Naive thymus-derived CD4-positive, alpha-beta T cell (primary cell): ENCODE measurements at regions of chr6 and their contacts with region 1.

Region 1: DNA sequence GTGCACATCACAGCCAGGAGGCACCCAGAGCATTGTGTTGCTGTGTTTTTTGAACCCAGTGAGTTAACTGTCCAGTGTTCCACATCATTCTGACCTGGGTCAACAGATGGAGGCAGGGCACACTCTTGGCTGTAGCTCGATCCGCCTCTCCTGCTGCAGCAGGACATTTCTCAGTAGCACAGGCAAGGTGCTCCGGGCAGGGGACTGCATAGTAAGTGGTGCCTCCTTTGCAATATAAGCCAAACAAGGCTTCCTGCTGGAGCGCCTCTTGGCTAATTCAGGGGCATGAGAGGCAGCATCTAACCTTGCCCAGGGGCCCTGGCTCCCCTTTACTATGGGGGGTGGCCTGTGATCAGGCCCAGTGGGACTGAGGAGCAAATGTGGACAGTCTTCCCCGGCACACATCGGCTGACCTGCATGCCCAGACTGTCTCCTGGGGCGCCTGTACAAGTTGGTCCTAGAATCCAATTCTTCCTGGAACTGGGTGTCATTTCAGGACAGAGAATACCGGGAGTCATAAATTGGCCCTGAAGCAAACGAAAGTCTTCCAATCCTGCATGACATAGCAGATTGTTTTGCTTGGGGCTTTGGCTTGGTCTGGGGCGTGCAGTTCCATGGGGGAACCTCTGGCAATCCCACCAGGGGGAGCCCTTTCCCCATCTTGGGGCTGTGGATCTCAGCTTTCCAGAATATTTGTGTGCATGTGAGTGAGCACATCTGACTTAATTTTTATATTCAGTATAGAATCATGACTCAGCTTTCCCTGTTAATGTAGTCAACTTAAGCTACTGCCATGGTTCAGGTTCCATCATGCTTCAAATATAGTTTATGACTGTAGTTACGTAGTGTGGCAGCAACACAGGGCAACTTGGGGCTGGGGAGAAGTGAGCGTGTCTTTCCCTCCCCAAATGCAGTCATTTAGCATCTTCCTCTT is 56.0 kb upstream of the DDR1 start:
- DNase-seq: peak; percentile 66 to 86 (median 79)
- ATAC-seq: peak; percentile 92
- H3K4me3 ChIP-seq: peak overlapping the region; percentile 80
- H3K4me3 Mint-ChIP-seq: peak overlapping the region; percentile 89 to 100 (median 96)
- H3K27ac ChIP-seq: peak overlapping the region; percentile 84
- H3K27ac Mint-ChIP-seq: peak overlapping the region; percentile 82 to 99 (median 96)
- H3K4me1 ChIP-seq: peaks cover 36 to 45% of the 10 kb centered on the region in 2 donors
- H3K4me1 Mint-ChIP-seq: peaks cover 51 to 92% (median 87%) of the 10 kb centered on the region in 7 donors
- H3K27me3 ChIP-seq: no peaks in the 10 kb centered on the region
- H3K27me3 Mint-ChIP-seq: no peaks in the 10 kb centered on the region

Region 2: DNA sequence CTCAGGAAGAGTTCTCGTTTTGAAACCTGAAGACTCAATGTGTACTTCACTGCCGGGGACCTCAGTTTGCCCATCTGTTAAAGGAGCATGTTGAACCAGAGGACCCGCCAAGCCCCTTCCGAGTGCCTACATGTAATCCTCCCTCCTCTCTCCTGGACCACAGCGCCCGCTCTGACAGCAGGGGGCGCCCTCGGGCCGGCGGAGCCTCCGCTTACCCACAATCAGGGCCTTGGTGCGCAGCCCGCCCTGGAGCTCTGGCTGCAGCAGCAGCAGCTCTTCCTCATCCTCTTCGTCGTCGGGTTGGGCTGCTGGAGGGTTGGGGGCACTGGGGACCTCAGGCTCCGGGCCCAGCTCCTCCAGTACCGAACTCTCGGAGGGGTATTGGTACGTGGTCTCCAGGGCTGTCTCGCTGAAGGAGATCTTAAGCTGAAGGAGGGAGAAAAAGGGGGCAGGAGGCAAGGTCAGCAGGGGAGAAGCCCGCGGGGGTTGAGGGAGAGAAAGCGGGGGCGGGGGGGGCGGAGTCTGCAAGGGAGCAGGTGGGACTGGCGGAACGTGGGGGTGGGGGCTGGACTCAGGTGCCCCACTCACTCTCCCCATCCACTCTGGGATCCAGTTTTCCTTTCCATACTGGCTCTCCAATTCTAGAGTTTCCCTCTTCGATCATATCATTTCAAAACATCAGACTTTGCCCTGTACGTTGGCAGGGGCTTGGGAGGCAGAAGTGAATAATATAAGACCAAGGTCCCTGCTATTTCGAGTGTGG is 149.1 kb before region 1 on chr6:
- CTCF ChIA-PET with region 1: no interaction called
- POLR2A ChIA-PET with region 1: no interaction called
- intact Hi-C with region 1: loop called (anchors 5 kb)
- DNase-seq: peak; percentile 86 to 97 (median 92)
- ATAC-seq: peak; percentile 65
- H3K4me3 ChIP-seq: peak overlapping the region; percentile 98
- H3K4me3 Mint-ChIP-seq: peak overlapping the region; percentile 90 to 100 (median 97)
- H3K27ac ChIP-seq: peak overlapping the region; percentile 95
- H3K27ac Mint-ChIP-seq: peak overlapping the region; percentile 85 to 99 (median 97)
- H3K4me1 ChIP-seq: peaks cover 5 to 24% of the 10 kb centered on the region in 2 donors
- H3K4me1 Mint-ChIP-seq: peaks cover 20 to 47% (median 38%) of the 10 kb centered on the region in 7 donors
- H3K27me3 ChIP-seq: no peaks in the 10 kb centered on the region
- H3K27me3 Mint-ChIP-seq: no peaks in the 10 kb centered on the region

Region 3: GRCh38 chr6:30742316-30743098 is 85.8 kb before region 1 on chr6 and contains the start of gene FLOT1:
- CTCF ChIA-PET with region 1: interaction called, 6 read pairs
- POLR2A ChIA-PET with region 1: interaction called, 5 read pairs
- intact Hi-C with region 1: loop called (anchors 1 to 2 kb)
- DNase-seq: peak in 7 of 9 donors; percentile 47 to 98 (median 56)
- ATAC-seq: peak; percentile 84
- H3K4me3 ChIP-seq: peak within 1 kb of the TSS; percentile 85
- H3K4me3 Mint-ChIP-seq: peak within 1 kb of the TSS; percentile 84 to 100 (median 93)
- H3K27ac ChIP-seq: peak within 1 kb of the TSS; percentile 83
- H3K27ac Mint-ChIP-seq: peak within 1 kb of the TSS; percentile 84 to 98 (median 93)
- H3K4me1 ChIP-seq: peaks cover 28 to 35% of the 10 kb centered on the region in 2 donors
- H3K4me1 Mint-ChIP-seq: peaks cover 48 to 74% (median 61%) of the 10 kb centered on the region in 7 donors
- H3K27me3 ChIP-seq: no peaks in the 10 kb centered on the region
- H3K27me3 Mint-ChIP-seq: no peaks in the 10 kb centered on the region
- total RNA-seq, gene FLOT1: 59.4 to 204 (median 81.3) TPM

Region 4: DNA sequence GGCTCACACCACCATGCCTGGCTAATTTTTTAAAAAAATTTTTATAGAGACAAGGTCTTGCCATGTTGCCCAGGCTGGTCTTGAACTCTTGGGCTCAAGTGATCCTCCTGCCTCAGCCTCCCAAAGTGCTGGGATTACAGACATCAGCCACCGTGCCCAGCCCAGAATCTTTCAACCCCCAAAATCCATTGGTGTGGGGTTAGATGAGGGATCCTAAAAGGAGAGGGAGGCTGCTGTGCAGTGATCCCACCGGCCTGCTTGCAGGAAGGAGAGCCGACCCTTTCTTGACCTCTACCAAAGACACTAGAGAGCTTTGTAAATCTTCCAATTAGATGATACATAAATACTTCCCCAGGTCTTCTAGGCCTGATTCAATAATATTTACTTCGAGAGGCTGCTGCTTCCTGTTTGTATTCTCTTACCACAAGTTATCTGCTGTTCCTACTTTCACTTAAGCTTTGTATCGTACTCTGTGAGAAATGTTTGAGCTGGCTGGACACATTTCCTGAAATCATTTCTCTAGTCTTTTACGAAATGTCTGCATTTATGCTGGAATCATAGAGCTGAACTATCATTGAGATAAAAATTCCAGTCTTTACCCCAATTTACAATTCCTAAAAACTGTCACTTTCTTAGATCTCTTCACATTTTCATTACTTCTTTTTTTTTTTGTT is 34.6 kb before region 1 on chr6:
- CTCF ChIA-PET with region 1: interaction called, 7 read pairs
- POLR2A ChIA-PET with region 1: interaction called, 10 read pairs
- intact Hi-C with region 1: no loop called
- DNase-seq: peak in 7 of 9 donors; percentile 22 to 69 (median 57)
- ATAC-seq: peak; percentile 94
- H3K4me3 ChIP-seq: peak overlapping the region; percentile 12
- H3K4me3 Mint-ChIP-seq: peak overlapping the region; percentile 64 to 85 (median 78)
- H3K27ac ChIP-seq: peak overlapping the region; percentile 71
- H3K27ac Mint-ChIP-seq: peak overlapping the region; percentile 90 to 99 (median 96)
- H3K4me1 ChIP-seq: peaks cover 16 to 27% of the 10 kb centered on the region in 2 donors
- H3K4me1 Mint-ChIP-seq: peaks cover 29 to 72% (median 58%) of the 10 kb centered on the region in 7 donors
- H3K27me3 ChIP-seq: no peaks in the 10 kb centered on the region
- H3K27me3 Mint-ChIP-seq: no peaks in the 10 kb centered on the region

Region 5: GRCh38 chr6:30883685-30884520 is 55.6 kb after region 1 on chr6 and contains the start of gene DDR1:
- CTCF ChIA-PET with region 1: interaction called, 172 read pairs
- POLR2A ChIA-PET with region 1: interaction called, 20 read pairs
- intact Hi-C with region 1: no loop called
- DNase-seq: peak in 6 of 9 donors; percentile 17 to 42 (median 24)
- ATAC-seq: peak; percentile 66
- H3K4me3 ChIP-seq: peak within 1 kb of the TSS; percentile 68
- H3K4me3 Mint-ChIP-seq: peak within 1 kb of the TSS; percentile 73 to 91 (median 82)
- H3K27ac ChIP-seq: peak within 1 kb of the TSS; percentile 70
- H3K27ac Mint-ChIP-seq: peak within 1 kb of the TSS; percentile 53 to 93 (median 89)
- H3K4me1 ChIP-seq: peaks cover 12 to 35% of the 10 kb centered on the region in 2 donors
- H3K4me1 Mint-ChIP-seq: peaks cover 25 to 53% (median 32%) of the 10 kb centered on the region in 7 donors
- H3K27me3 ChIP-seq: no peaks in the 10 kb centered on the region
- H3K27me3 Mint-ChIP-seq: peaks cover 0 to 7% (median 0%) of the 10 kb centered on the region in 5 donors
- total RNA-seq, gene DDR1: 13.7 to 23.8 (median 18.6) TPM

Region 6: DNA sequence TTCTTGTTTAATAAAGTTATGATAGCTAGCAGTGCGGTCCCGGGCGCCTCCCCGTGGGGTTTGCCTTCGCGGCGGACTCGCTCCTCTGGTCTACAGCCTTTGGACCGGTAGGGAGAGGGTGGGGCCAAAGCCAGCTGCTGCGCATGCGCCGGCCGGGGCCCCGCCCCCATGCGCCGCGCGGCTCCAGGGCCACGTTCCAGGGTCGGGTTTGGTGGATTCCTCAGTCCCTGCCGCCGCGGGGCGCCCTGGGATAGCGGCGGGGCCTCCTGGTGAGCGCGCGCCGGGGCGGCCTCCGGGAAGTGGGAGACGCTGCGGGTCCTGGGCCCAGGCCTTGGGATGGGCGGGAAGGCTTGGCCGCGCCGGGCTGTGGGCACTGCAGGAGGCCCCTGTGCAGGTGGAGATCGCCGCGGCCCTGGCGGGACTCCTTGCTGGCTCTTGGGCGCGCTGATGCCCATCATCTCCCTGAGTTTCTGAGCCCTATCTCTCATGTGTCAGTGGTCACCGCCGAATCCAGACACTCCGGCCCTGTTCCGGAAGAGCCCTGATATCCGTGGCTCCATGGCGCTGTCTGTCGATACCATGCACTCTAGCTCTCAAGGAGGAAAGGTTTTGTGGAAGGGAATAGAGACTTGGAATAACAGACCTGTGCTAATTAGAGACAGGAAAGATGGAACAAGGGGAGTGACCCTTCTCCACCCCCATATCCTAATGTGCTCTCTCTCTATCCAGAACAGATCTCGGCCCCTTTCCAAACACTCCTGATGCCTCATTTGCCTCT is 86.0 kb after region 1 on chr6 and contains the start of gene VARS2:
- CTCF ChIA-PET with region 1: interaction called, 11 read pairs
- POLR2A ChIA-PET with region 1: interaction called, 5 read pairs
- intact Hi-C with region 1: loop called in 1 of 2 experiments (anchors 1 kb)
- DNase-seq: peak; percentile 80 to 95 (median 86)
- ATAC-seq: peak; percentile 98
- H3K4me3 ChIP-seq: peak within 1 kb of the TSS; percentile 64
- H3K4me3 Mint-ChIP-seq: peak within 1 kb of the TSS; percentile 87 to 96 (median 92)
- H3K27ac ChIP-seq: peak within 1 kb of the TSS; percentile 78
- H3K27ac Mint-ChIP-seq: peak within 1 kb of the TSS; percentile 81 to 93 (median 88)
- H3K4me1 ChIP-seq: peaks cover 13 to 17% of the 10 kb centered on the region in 2 donors
- H3K4me1 Mint-ChIP-seq: peaks cover 20 to 51% (median 40%) of the 10 kb centered on the region in 7 donors
- H3K27me3 ChIP-seq: no peaks in the 10 kb centered on the region
- H3K27me3 Mint-ChIP-seq: no peaks in the 10 kb centered on the region
- total RNA-seq, gene VARS2: 22.2 to 47.3 (median 37.9) TPM

Region 7: GRCh38 chr6:31087494-31088089 is 259.3 kb after region 1 on chr6:
- CTCF ChIA-PET with region 1: interaction called, 37 read pairs
- POLR2A ChIA-PET with region 1: interaction called, 7 read pairs
- intact Hi-C with region 1: loop called (anchors 1 to 2 kb)
- DNase-seq: peak; percentile 66 to 89 (median 80)
- ATAC-seq: peak; percentile 100
- H3K4me3 ChIP-seq: no peak overlapping the region
- H3K4me3 Mint-ChIP-seq: no peak overlapping the region
- H3K27ac ChIP-seq: no peak overlapping the region
- H3K27ac Mint-ChIP-seq: peak overlapping the region in 4 of 9 donors; percentile 9 to 73 (median 46)
- H3K4me1 ChIP-seq: no peaks in the 10 kb centered on the region
- H3K4me1 Mint-ChIP-seq: peaks cover 6 to 14% (median 10%) of the 10 kb centered on the region in 7 donors
- H3K27me3 ChIP-seq: no peaks in the 10 kb centered on the region
- H3K27me3 Mint-ChIP-seq: peaks cover 0 to 21% (median 0%) of the 10 kb centered on the region in 5 donors